ENCODE measurements at regions of chr17 and their contacts with region 1.

Region 1: GRCh38 chr17:1186923-1187771 is 7.4 kb upstream of the ABR start:
- DNase-seq: peak; percentile 95
- H3K4me3 ChIP-seq: peak overlapping the region in 3 of 4 donors; percentile 25 to 28 (median 27)
- H3K27ac ChIP-seq: peak overlapping the region; percentile 58 to 77 (median 70)
- H3K4me1 ChIP-seq: peaks cover 0 to 39% (median 37%) of the 10 kb centered on the region in 4 donors
- H3K27me3 ChIP-seq: no peaks in the 10 kb centered on the region
- CTCF ChIP-seq: peak; percentile 92 to 99 (median 96)
- EP300 ChIP-seq: no peak
- POLR2A ChIP-seq: no peak

Region 2: DNA sequence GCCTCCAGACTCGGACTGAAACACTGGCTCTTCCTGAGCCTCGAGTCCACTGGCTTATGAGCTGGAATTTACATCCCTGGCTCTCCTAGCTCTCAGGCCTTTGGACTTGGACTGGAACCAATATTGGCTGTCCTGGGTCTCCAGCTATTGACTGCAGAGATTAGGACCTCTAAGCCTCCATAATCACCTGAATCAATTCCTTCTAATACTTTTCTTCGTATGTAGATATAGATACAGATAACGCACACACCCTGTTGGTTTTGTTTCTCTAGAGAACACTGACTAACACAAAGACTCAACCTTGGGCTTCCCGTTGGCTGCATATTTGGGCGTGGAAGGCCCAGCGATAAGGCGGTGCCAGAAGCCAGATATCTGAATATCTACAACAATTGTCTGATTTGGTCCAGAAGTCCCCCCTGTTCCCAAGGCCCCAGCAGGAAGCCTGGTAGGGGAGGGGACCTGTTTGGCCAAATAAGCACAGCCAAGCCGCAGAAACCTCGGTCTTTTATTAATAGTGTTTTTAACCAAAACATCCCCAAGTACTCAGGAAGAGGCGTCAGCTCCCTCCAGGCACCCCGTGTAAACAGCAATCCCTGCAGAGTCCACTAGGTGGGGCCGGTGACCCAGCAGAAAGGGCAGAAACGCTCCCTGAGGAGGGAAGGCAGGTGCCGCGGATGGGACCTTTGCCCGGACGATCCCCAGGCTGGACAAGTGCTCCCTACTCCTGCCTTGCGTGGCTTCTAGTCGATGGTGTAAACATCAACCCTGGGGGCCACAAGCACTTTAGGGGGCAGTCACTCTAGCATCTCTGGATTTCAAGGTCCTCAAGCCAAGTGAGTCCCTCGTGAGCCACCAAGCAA is 64.4 kb before region 1 on chr17:
- intact Hi-C with region 1: loop called (anchors 1 kb)
- DNase-seq: peak; percentile 91
- H3K4me3 ChIP-seq: no peak overlapping the region
- H3K27ac ChIP-seq: peak overlapping the region in 3 of 4 donors; percentile 48 to 57 (median 55)
- H3K4me1 ChIP-seq: peaks cover 0 to 15% (median 7%) of the 10 kb centered on the region in 4 donors
- H3K27me3 ChIP-seq: no peaks in the 10 kb centered on the region
- CTCF ChIP-seq: peak; percentile 91 to 97 (median 94)
- EP300 ChIP-seq: no peak
- POLR2A ChIP-seq: no peak

Measured in sigmoid colon (tissue), 7 donors.